Activated naive CD4-positive, alpha-beta T cell treated with anti-CD3 and anti-CD28 coated beads, Interleukin-2, amount 10 ng/mL, durations not matched to agents 7 days and 5 days (primary cell): ENCODE measurements at regions of chr6 and their contacts with region 1.

Region 1: DNA sequence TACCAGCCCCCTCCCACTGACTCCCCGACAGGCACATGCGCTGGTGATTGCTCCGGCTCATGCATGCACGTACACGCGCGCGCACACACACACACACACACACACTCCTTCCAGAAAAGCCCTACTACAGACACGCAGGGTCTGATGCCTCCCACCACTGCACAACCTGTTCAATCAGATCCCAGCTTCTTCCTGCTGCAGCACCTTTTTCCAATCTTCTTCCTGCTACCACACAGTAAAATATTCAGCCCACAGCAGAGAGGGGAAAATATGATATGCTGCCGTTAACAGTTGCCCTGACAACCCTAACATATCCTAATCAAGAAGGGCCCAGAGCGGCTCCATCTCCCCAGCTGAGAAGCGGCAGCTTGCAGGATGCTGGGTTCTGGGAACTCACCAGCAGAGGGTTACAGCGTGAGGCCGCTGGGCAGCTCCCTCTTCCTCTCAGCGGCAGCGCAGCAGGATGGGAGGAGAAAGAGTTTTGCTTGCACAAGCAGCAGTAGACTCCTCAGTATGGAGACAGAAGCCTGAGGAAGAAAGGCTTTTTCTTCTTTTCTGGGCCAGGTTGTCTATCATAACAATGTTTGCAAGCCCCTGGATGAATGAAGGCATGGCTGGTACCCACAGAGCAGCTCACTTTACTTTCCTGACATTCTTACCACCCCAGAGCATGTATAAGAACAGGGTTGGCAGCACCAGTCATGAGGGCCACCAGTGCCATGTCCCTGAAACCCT is 23.9 kb downstream of the MAP7 start:
- DNase-seq: peak; percentile 63
- H3K4me3 Mint-ChIP-seq: no peak overlapping the region
- H3K27ac Mint-ChIP-seq: no peak overlapping the region
- H3K4me1 Mint-ChIP-seq: peaks cover 15% of the 10 kb centered on the region
- H3K27me3 Mint-ChIP-seq: peaks cover 10% of the 10 kb centered on the region

Region 2: GRCh38 chr6:136429264-136430065 is 96.9 kb before region 1 on chr6:
- CTCF ChIA-PET with region 1: no interaction called
- DNase-seq: no peak
- H3K4me3 Mint-ChIP-seq: no peak overlapping the region
- H3K27ac Mint-ChIP-seq: no peak overlapping the region
- H3K4me1 Mint-ChIP-seq: no peaks in the 10 kb centered on the region
- H3K27me3 Mint-ChIP-seq: peaks cover 8% of the 10 kb centered on the region

Region 3: GRCh38 chr6:136550330-136551071 is 24.1 kb after region 1 on chr6 and contains the start of gene MAP7:
- CTCF ChIA-PET with region 1: interaction called, 10 read pairs
- DNase-seq: peak; percentile 75
- H3K4me3 Mint-ChIP-seq: peak within 1 kb of the TSS; percentile 61
- H3K27ac Mint-ChIP-seq: no peak within 1 kb of the TSS
- H3K4me1 Mint-ChIP-seq: peaks cover 11% of the 10 kb centered on the region
- H3K27me3 Mint-ChIP-seq: peaks cover 50% of the 10 kb centered on the region

Region 4: DNA sequence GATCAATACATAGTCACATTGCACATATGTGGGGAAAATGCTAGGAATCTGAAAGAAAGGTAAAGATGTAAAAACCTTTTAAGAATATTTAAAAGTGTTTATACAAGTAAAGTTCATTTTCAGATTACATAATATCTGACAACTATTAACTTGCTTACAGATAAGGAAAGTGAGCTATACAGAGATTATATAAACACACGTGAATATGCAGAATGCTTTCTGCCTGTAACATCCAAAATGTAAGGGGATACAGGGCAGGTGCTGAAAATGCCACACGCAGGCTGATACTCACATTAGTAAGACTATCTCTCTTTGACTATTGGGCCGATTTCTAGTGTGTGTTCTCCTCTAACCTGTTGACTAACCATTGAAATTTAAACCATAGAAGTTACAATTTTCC is 41.8 kb after region 1 on chr6:
- CTCF ChIA-PET with region 1: no interaction called
- DNase-seq: no peak
- H3K4me3 Mint-ChIP-seq: no peak overlapping the region
- H3K27ac Mint-ChIP-seq: no peak overlapping the region
- H3K4me1 Mint-ChIP-seq: peaks cover 6% of the 10 kb centered on the region
- H3K27me3 Mint-ChIP-seq: no peaks in the 10 kb centered on the region